T-cell (primary cell): ENCODE measurements at regions of chr1 and their contacts with region 1.

Region 1: DNA sequence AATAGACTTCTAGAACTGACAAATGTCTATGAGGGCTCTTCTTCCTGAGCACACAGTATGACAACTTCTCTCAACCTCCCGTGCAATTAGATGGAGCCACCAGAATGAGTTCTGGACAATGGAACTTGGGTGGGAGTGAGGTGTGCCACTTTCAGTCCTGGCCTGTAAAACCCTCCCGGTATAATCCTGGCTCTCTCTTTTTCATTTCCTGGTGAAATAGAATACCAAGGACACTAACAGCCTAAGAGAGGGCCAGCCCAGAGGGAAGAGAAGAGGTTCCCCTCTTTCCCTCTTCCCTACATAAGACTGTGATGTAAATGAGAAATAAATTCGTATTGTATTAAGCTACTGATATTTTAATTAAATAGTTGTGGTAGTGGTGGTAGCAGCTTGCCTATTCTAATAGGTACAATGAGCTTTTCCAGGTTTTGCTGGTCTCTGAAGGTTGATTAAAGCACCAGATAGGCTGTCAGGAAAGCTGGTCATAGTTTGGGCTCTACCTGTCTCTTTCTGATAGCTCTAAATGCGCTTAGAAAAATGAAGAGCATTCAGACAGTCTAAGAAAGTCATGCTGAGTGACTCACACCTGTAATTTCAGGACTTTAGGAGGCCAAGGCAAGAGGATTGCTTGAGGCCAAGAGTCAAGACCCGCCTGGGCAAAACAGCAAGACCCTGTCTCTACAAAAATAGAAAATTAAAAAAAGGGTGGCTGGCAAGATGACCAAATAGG is 108.6 kb upstream of the ZNF644 start:
- DNase-seq: no peak
- ATAC-seq: no peak
- H3K4me3 ChIP-seq: no peak overlapping the region
- H3K4me3 Mint-ChIP-seq: no peak overlapping the region
- H3K27ac ChIP-seq: no peak overlapping the region
- H3K27ac Mint-ChIP-seq: no peak overlapping the region
- H3K4me1 ChIP-seq: no peaks in the 10 kb centered on the region
- H3K4me1 Mint-ChIP-seq: no peaks in the 10 kb centered on the region
- H3K27me3 ChIP-seq: peaks cover 0 to 17% of the 10 kb centered on the region in 2 experiments
- H3K27me3 Mint-ChIP-seq: peaks cover 10 to 14% of the 10 kb centered on the region in 2 donors

Region 2: GRCh38 chr1:91148641-91149069 is 18.2 kb after region 1 on chr1:
- CTCF ChIA-PET with region 1: no interaction called
- POLR2A ChIA-PET with region 1: interaction called in 1 of 2 experiments, 16 read pairs
- DNase-seq: no peak
- ATAC-seq: no peak
- H3K4me3 ChIP-seq: no peak overlapping the region
- H3K4me3 Mint-ChIP-seq: no peak overlapping the region
- H3K27ac ChIP-seq: no peak overlapping the region
- H3K27ac Mint-ChIP-seq: no peak overlapping the region
- H3K4me1 ChIP-seq: no peaks in the 10 kb centered on the region
- H3K4me1 Mint-ChIP-seq: no peaks in the 10 kb centered on the region
- H3K27me3 ChIP-seq: peaks cover 0 to 3% of the 10 kb centered on the region in 2 experiments
- H3K27me3 Mint-ChIP-seq: peaks cover 12 to 19% of the 10 kb centered on the region in 2 donors

Region 3: DNA sequence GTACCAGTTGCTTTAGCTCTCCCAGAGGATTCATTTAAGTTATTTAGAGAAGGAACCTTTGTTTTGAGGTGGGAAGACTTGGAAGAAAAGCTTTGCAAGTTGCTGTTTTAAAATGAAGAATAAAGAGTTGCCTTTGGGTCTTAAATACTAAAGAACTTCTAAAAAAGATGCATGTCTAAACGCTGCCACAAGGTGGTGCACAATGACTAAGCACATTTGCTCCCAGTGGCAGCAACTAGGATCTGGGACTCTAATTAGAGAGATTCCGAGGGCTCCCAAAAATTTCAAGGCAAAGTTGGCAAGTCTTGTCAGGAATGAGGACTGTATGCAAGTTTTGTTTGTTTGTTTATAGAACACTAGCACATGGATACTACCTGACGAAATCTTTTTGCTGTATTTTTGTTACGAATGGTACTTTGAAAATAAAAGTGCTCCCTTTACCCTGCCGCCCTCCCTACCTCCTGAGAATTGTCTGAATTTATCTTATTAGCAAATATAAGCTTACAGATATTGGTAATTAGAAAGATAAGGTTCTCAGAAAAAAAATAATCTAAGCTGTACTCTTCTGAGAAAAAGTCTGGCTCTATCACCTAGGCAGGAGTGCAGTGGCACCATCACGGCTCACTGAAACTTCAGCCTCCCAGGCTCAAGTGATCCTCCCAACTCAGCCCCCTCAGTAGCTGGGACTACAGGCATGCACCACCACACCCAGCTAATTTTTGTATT is 152.4 kb after region 1 on chr1:
- CTCF ChIA-PET with region 1: no interaction called
- POLR2A ChIA-PET with region 1: no interaction called
- DNase-seq: peak in 23 of 35 experiments; percentile 2 to 68 (median 16)
- ATAC-seq: peak in 1 of 4 experiments; percentile 45
- H3K4me3 ChIP-seq: no peak overlapping the region
- H3K4me3 Mint-ChIP-seq: no peak overlapping the region
- H3K27ac ChIP-seq: no peak overlapping the region
- H3K27ac Mint-ChIP-seq: peak overlapping the region in 1 of 2 donors; percentile 36
- H3K4me1 ChIP-seq: no peaks in the 10 kb centered on the region
- H3K4me1 Mint-ChIP-seq: no peaks in the 10 kb centered on the region
- H3K27me3 ChIP-seq: no peaks in the 10 kb centered on the region
- H3K27me3 Mint-ChIP-seq: peaks cover 3 to 7% of the 10 kb centered on the region in 2 donors

Region 4: GRCh38 chr1:91450260-91450659 is 319.8 kb after region 1 on chr1:
- CTCF ChIA-PET with region 1: no interaction called
- POLR2A ChIA-PET with region 1: no interaction called
- DNase-seq: no peak
- ATAC-seq: no peak
- H3K4me3 ChIP-seq: no peak overlapping the region
- H3K4me3 Mint-ChIP-seq: no peak overlapping the region
- H3K27ac ChIP-seq: no peak overlapping the region
- H3K27ac Mint-ChIP-seq: no peak overlapping the region
- H3K4me1 ChIP-seq: no peaks in the 10 kb centered on the region
- H3K4me1 Mint-ChIP-seq: no peaks in the 10 kb centered on the region
- H3K27me3 ChIP-seq: no peaks in the 10 kb centered on the region
- H3K27me3 Mint-ChIP-seq: peaks cover 2 to 8% of the 10 kb centered on the region in 2 donors